GM18951 (cell line): ENCODE measurements at regions of chr10 and their contacts with region 1.

Region 1: DNA sequence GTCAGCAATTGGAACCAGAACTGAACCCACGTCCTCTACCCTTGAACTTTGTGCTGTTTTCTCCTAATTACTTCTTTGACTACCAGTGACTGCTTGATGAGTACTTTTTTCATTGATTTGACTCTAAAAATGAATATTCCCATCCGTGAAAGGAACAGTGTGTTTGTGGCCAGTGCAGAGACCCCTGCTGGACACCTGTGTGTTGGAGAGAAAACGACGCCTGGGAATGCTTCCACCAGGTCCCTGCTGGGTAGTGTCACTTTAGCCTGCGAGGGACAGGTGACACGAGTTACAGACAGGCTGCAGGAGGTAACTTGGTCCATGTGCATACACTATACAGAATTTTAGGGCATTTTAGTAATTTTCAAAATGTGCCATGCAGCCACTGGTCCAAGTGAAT is 6.8 kb upstream of the GJD4 start:
- POLR2A ChIP-seq: no peak

Region 2: GRCh38 chr10:35103882-35104281 is 494.5 kb before region 1 on chr10:
- in situ Hi-C with region 1: loop called (anchors 25 kb)
- POLR2A ChIP-seq: no peak

Region 3: DNA sequence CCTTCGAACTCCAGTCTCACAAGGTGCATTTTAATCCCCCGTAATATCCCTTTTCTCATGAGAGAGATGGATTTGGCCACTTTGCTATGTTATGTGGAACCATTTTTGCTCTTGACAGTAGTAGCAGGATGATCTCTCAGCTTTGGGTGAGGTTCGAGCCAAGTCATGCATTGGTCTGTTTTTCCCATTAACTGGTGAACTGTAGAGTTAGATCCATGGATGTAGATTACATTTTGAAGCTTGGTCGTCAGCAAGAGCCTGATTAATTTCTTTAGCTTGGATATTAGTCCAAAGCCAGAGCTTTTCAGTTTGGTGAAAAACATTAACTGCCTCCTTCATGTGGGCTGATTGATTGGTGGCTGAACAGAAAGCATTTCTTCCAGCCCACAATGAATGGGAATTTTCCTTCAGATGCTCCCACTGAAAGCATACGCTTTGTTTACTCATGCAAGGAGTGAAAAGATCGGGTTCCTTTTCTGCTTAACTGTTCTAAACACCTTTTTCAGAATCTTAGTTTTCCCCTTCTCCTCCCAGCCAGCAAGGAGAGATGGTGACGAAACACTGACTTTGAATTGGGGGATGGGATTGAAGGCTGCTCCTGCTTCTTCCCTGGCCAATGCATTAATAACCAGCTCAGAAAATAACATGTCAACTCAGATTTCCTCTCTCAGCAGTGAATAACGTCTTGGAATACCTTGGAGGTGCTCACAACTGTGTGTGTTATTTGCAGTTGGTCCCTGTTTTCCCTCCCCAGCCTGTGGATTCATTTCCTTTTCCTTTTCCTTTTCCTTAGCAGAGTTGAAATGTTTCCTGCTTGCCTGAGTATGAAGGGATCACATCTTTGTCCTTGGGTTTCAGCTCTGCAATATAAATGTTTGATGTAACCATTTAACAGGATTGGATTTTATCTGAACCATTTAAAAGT is 395.5 kb after region 1 on chr10:
- in situ Hi-C with region 1: no loop called
- POLR2A ChIP-seq: no peak